ENCODE measurements at regions of chr6 and their contacts with region 1.

Region 1: DNA sequence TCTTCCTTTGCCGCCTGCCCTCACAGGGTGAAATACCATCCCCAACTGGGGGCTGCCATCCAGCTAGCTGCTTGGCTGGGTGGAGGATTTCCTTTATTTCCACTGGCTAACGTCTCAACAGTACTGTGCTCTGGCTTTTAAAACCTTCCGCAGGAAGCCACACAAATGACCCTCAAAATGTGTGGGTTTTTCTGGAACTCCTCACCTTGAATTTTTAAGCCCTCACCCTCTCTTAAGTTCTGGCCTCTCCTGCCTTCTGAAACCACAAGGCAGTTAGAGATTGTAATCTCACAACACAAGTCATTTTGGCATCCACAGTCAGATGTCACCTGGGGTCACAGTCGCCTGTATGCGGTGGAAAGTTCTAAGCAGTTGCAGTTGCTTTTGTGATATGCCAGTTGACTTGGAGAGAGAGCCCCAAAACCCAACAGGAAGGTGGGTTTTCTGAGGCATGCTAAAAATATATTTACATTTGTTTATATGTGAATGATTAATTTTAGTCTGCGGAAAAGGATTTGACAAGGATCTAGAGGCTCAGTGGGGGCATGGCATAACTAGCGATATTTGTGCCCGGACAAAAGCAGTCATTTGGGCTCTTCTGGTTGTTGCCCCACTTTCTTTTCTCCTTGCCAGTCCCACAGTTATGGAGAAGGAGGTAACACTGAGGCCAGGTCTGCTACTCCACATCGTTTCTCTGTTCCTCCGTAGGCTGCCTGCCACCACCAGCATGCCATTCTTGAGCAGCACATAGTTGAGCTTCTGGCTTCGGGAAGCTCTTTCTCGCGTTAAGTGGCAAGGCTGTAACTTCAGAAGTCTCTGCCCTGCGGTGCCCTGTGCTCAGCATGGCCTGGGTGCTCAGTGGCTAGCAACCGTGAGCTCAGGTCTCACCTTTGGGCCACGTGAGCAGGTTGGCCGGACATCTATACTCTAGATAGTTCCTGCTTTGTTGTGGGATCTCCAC is 335.3 kb downstream of the CD83 start:
- DNase-seq: peak; percentile 62
- H3K4me3 Mint-ChIP-seq: peak overlapping the region; percentile 58
- H3K27ac Mint-ChIP-seq: peak overlapping the region; percentile 91
- H3K4me1 Mint-ChIP-seq: peaks cover 88% of the 10 kb centered on the region
- H3K27me3 Mint-ChIP-seq: peaks cover 2% of the 10 kb centered on the region

Region 2: GRCh38 chr6:14270925-14271791 is 181.7 kb before region 1 on chr6:
- intact Hi-C with region 1: loop called (anchors 2 kb)
- DNase-seq: peak; percentile 66
- H3K4me3 Mint-ChIP-seq: peak overlapping the region; percentile 62
- H3K27ac Mint-ChIP-seq: peak overlapping the region; percentile 90
- H3K4me1 Mint-ChIP-seq: peaks cover 40% of the 10 kb centered on the region
- H3K27me3 Mint-ChIP-seq: no peaks in the 10 kb centered on the region

Region 3: DNA sequence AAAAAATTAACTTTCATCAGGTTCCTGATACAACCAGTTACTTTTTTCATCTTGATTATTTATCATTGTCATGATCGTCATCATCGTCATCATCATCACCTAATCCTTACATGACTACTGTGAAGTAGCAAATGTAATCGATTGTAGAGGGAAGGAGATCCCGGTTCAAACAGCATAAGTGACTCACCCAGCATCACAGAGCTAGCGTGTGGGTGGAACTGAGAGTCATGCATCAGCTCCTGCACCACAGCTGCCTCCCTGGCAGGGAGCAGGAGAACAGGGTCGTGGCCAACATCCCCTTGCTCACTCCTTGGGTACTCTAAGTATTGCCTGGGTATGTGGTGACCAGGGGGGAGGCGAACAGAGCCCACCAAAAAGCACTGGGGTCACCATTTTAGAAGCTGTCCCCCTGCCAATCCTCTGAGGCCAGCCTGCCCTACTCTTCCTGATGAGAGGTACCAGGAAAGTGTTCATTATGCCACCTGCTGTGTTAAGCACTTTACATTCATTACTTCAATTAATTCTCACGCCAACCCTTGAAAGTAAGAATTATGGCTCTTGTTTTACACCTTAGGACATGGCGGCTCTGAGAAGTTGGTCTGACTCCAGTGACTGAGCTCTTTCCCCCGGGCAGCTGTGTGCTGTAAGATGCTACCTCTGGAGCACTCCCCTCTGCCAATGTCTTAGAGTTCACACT is 90.0 kb after region 1 on chr6:
- intact Hi-C with region 1: loop called (anchors 1 kb)
- DNase-seq: peak; percentile 10
- H3K4me3 Mint-ChIP-seq: no peak overlapping the region
- H3K27ac Mint-ChIP-seq: peak overlapping the region; percentile 64
- H3K4me1 Mint-ChIP-seq: peaks cover 26% of the 10 kb centered on the region
- H3K27me3 Mint-ChIP-seq: peaks cover 1% of the 10 kb centered on the region

Region 4: DNA sequence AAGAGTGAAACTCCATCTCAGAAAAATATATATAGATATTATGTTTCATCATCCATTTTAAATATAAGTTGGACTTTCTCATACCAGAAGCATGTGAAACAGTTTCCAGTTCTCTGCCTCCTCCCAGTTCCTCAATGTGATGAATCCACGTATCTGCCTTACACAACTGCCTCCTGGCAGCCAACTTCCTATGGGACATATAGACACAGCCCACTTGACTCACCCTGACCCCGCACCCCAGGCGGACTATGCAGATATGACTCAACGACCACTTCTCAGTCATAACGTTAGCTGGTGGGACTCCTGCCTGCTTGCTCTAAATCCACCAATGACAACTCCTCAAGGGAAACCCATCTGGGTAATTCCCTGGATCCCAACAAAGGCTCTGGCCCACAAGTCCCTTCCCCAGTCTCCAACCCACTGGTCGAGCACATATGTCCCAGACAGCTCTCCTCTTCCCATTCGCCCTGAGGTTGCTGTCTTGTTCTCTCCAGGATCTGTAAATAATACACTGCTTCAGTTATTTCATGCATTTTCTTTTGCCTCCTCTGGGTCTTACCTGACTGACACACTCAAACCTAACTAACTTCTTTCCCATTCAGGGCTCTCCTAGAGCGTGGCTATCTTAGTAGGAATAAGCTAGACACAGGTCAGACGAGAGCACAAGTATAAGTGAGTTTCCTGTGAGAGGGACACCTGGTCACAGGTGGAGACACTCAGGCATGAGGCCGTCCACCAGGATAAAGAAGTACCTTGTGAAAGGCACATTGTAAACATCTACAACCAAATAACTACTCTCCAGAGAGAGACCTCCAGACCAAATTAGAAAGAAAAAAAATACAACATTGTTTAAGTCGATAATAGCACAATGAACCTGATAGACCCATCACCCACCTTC is 213.2 kb after region 1 on chr6:
- intact Hi-C with region 1: loop called (anchors 1 kb)
- DNase-seq: no peak
- H3K4me3 Mint-ChIP-seq: no peak overlapping the region
- H3K27ac Mint-ChIP-seq: no peak overlapping the region
- H3K4me1 Mint-ChIP-seq: peaks cover 28% of the 10 kb centered on the region
- H3K27me3 Mint-ChIP-seq: peaks cover 32% of the 10 kb centered on the region

Region 5: DNA sequence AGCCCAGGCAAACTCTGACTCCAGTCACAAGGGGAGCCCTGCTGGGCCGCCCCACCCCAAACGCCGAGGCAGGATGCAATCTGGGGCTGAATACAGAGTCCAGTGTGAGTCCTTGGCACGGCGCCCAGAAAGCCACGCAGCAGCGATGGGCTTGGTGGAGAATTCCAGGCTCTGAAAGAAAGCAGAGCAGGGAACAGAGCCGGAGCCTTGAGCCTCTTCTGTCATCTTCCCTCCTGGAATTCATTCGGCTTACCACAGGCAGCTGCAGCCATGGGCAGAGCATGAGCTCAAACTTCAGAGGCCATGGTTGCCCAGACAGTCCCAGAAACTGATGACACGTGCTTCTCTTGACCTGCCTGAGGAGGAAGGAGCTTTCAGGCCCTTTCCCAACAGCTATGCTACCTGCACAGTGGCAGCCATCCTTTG is 352.0 kb after region 1 on chr6:
- intact Hi-C with region 1: no loop called
- DNase-seq: no peak
- H3K4me3 Mint-ChIP-seq: no peak overlapping the region
- H3K27ac Mint-ChIP-seq: no peak overlapping the region
- H3K4me1 Mint-ChIP-seq: peaks cover 6% of the 10 kb centered on the region
- H3K27me3 Mint-ChIP-seq: no peaks in the 10 kb centered on the region

Region 6: DNA sequence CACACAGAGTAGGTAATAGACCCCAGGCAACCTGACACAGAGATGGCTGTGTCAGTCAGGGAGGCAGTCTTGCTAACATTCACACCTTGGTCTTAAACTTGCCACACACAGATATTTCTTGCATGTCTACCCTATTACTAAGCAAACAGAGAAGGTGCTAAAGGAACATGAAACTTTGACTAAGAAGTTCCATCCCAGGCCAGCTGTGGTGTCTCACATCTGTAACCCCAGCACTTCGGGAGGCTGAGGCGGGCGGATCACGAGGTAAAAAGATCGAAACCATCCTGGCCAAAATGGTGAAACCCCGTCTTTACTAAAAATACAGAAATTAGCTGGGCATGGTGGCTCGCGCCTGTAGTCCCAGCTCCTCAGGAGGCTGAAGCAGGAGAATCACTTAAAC is 570.6 kb after region 1 on chr6:
- intact Hi-C with region 1: loop called (anchors 1 kb)
- DNase-seq: peak; percentile 48
- H3K4me3 Mint-ChIP-seq: peak overlapping the region; percentile 31
- H3K27ac Mint-ChIP-seq: peak overlapping the region; percentile 94
- H3K4me1 Mint-ChIP-seq: peaks cover 53% of the 10 kb centered on the region
- H3K27me3 Mint-ChIP-seq: no peaks in the 10 kb centered on the region

Region 7: DNA sequence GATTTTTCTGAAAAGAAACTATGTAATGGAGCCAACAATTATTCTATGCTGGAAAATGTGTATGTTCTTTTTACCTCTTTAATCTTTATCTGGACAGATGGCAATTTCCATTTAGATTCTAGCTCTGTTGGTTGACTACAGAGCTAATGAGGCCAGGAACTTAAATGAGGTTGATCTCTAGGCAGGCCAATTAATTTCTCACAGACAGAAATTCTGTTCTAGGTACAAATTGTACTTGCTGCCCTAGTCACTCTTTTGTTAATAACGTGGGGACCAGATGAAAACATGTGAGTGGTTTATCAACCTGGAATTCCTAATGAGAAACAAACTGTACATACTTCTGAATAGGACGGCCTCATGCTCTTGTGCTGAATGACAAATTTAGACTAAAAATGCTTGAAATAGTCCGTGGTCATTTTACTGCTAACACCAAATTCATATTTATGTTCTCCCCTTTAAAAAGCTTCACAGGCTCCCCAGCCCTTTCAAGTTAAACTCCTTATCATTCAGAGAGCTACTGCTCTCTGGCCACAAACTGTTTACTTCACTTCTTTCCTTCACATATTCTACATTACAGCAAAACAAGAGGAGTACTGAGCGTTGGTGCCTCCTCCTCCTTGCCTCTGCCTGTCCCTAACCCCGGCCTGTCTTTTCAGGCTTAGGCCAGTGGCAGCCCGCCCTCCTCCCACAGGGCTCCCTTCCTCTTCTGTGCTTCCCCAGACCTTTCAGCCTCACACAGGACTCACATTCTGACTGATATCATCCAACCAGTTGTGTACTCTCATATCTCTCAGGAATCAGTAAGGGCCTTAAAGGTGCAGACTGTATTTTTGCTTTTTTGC is 1168.6 kb after region 1 on chr6:
- intact Hi-C with region 1: loop called (anchors 5 kb)
- DNase-seq: no peak
- H3K4me3 Mint-ChIP-seq: no peak overlapping the region
- H3K27ac Mint-ChIP-seq: peak overlapping the region; percentile 16
- H3K4me1 Mint-ChIP-seq: peaks cover 27% of the 10 kb centered on the region
- H3K27me3 Mint-ChIP-seq: peaks cover 2% of the 10 kb centered on the region